Spleen (tissue), 13 donors: ENCODE measurements at regions of chr4 and their contacts with region 1.

Region 1: GRCh38 chr4:41204400-41204978 is 9.9 kb downstream of the APBB2 start:
- DNase-seq: no peak
- H3K4me3 ChIP-seq: no peak overlapping the region
- H3K27ac ChIP-seq: peak overlapping the region in 2 of 8 donors; percentile 44 to 67
- H3K4me1 ChIP-seq: peaks cover 4 to 38% (median 14%) of the 10 kb centered on the region in 6 donors
- H3K27me3 ChIP-seq: peaks cover 0 to 9% (median 0%) of the 10 kb centered on the region in 7 donors
- CTCF ChIP-seq: no peak
- POLR2A ChIP-seq: no peak

Region 2: GRCh38 chr4:40525811-40526598 is 678.5 kb before region 1 on chr4:
- intact Hi-C with region 1: no loop called
- DNase-seq: no peak
- H3K4me3 ChIP-seq: no peak overlapping the region
- H3K27ac ChIP-seq: peak overlapping the region in 4 of 8 donors; percentile 31 to 64 (median 48)
- H3K4me1 ChIP-seq: peaks cover 0 to 13% (median 5%) of the 10 kb centered on the region in 6 donors
- H3K27me3 ChIP-seq: no peaks in the 10 kb centered on the region
- CTCF ChIP-seq: no peak
- POLR2A ChIP-seq: no peak

Region 3: GRCh38 chr4:40613456-40613855 is 591.0 kb before region 1 on chr4:
- intact Hi-C with region 1: no loop called
- DNase-seq: no peak
- H3K4me3 ChIP-seq: no peak overlapping the region
- H3K27ac ChIP-seq: peak overlapping the region in 3 of 8 donors; percentile 3 to 26 (median 26)
- H3K4me1 ChIP-seq: peaks cover 0 to 79% (median 13%) of the 10 kb centered on the region in 6 donors
- H3K27me3 ChIP-seq: no peaks in the 10 kb centered on the region
- CTCF ChIP-seq: no peak
- POLR2A ChIP-seq: no peak

Region 4: GRCh38 chr4:41044165-41044564 is 160.3 kb before region 1 on chr4:
- intact Hi-C with region 1: no loop called
- DNase-seq: no peak
- H3K4me3 ChIP-seq: no peak overlapping the region
- H3K27ac ChIP-seq: no peak overlapping the region
- H3K4me1 ChIP-seq: peaks cover 0 to 4% (median 0%) of the 10 kb centered on the region in 6 donors
- H3K27me3 ChIP-seq: no peaks in the 10 kb centered on the region
- CTCF ChIP-seq: no peak
- POLR2A ChIP-seq: no peak

Region 5: GRCh38 chr4:41057467-41057866 is 147.0 kb before region 1 on chr4:
- intact Hi-C with region 1: loop called (anchors 10 kb)
- DNase-seq: no peak
- H3K4me3 ChIP-seq: no peak overlapping the region
- H3K27ac ChIP-seq: no peak overlapping the region
- H3K4me1 ChIP-seq: peaks cover 0 to 9% (median 1%) of the 10 kb centered on the region in 6 donors
- H3K27me3 ChIP-seq: no peaks in the 10 kb centered on the region
- CTCF ChIP-seq: no peak
- POLR2A ChIP-seq: no peak